IMR-90 (cell line): ENCODE measurements at regions of chr7 and their contacts with region 1.

Region 1: GRCh38 chr7:51067757-51068156 is 248.9 kb downstream of the COBL start:
- DNase-seq: peak; percentile 74
- ATAC-seq: peak; percentile 91
- H3K4me3 ChIP-seq: no peak overlapping the region
- H3K27ac ChIP-seq: no peak overlapping the region
- H3K4me1 ChIP-seq: no peaks in the 10 kb centered on the region
- H3K27me3 ChIP-seq: peaks cover 11% of the 10 kb centered on the region; the same call in 1 of the 2 replicates
- CTCF ChIP-seq: peak; percentile 75
- POLR2A ChIP-seq: no peak
- RAD21 ChIP-seq: peak; percentile 77

Region 2: DNA sequence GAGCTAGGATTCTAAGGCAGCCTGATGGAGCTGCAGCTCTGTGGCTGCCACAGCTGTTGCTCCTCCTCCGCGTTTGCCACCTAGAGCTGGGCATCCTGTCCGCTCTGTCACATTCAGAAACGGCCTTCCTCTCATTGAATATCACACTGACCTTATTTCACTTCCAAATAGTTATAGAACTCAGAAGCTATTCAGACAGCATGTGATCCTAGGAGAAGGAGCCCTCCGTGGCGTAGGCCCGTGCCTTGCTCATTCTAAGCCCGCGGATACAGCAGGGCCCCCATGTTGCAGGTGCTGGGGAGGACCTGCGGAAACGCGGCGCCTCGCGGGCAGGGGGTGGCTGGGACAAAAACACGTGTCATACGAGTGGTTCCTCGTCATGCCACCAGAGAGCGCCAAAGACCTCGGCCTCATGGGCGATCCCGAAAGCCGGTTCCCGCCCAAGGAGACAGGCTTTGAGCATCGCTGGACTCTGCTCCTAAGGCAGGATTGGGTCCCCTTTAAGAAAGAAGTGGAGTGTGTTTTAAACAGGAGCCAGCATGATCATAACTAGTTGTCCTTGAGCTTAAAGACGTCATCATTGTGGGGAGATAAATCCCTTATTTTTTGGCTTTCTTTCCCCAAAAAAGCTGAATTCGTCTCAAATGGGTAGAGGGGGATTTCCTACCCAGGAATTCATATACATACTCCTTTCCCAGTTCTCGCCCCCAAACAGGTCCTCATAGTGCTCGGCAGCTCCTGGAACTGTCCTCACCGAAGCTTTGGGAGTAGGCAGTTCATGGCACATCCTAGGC is 599.7 kb before region 1 on chr7:
- CTCF ChIA-PET with region 1: interaction called, 8 read pairs
- POLR2A ChIA-PET with region 1: no interaction called
- dilution Hi-C with region 1: no loop called
- in situ Hi-C with region 1: loop called (anchors 10 kb)
- intact Hi-C with region 1: loop called (anchors 1 kb)
- DNase-seq: peak; percentile 58
- ATAC-seq: peak; percentile 100
- H3K4me3 ChIP-seq: no peak overlapping the region
- H3K27ac ChIP-seq: no peak overlapping the region
- H3K4me1 ChIP-seq: no peaks in the 10 kb centered on the region
- H3K27me3 ChIP-seq: peaks cover 19% of the 10 kb centered on the region
- CTCF ChIP-seq: peak; percentile 92
- POLR2A ChIP-seq: peak; percentile 36; the same call in 1 of the 2 replicates
- RAD21 ChIP-seq: peak; percentile 96

Region 3: GRCh38 chr7:50608196-50608906 is 459.4 kb before region 1 on chr7:
- CTCF ChIA-PET with region 1: no interaction called
- POLR2A ChIA-PET with region 1: no interaction called
- dilution Hi-C with region 1: no loop called
- in situ Hi-C with region 1: no loop called
- intact Hi-C with region 1: loop called (anchors 10 kb)
- DNase-seq: no peak
- ATAC-seq: no peak
- H3K4me3 ChIP-seq: no peak overlapping the region
- H3K27ac ChIP-seq: no peak overlapping the region
- H3K4me1 ChIP-seq: no peaks in the 10 kb centered on the region
- H3K27me3 ChIP-seq: no peaks in the 10 kb centered on the region
- CTCF ChIP-seq: no peak
- POLR2A ChIP-seq: no peak
- RAD21 ChIP-seq: no peak

Region 4: DNA sequence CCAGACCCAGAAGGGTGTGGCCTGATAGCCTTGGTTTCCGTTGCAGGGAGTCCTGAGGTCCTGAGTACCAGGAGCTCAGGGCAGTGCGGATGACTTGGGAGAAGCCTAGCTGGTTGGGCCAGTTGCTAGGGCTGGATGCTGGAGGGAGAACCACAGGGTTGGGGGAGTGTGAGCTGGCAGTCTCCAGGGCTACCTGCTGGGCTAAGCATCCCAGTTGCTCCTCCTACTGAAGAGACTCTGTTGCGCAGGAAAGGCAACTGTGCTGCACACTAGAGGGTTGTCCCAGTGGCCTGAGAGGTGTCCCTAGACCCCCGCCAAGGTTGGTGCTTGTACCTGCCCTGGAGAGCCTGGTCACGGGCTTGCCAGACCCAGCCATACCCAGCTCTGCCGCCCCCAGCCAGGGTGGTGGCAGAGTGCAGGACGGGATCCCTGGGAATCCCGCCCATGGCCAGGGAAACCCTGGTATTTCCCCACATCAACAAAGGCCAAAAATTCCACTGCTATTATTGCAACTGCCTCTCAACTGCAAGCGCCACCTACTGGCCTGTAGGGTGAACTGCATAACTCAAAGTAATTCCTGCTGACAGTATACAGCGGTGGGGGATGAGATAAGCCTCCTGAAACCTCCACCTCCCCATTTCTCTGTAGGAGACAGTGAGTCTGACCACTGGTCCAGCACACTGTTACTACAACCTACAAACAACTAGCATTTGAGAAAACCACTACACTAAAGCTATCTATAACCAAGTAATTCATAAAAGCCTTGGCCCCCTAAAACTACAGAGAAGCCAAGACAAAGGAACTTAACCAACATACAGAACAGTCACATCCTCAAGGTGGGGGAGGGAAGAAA is 435.0 kb before region 1 on chr7:
- CTCF ChIA-PET with region 1: no interaction called
- POLR2A ChIA-PET with region 1: no interaction called
- dilution Hi-C with region 1: no loop called
- in situ Hi-C with region 1: no loop called
- intact Hi-C with region 1: loop called (anchors 1 kb)
- DNase-seq: peak; percentile 50
- ATAC-seq: peak; percentile 95
- H3K4me3 ChIP-seq: no peak overlapping the region
- H3K27ac ChIP-seq: no peak overlapping the region
- H3K4me1 ChIP-seq: no peaks in the 10 kb centered on the region
- H3K27me3 ChIP-seq: no peaks in the 10 kb centered on the region
- CTCF ChIP-seq: peak; percentile 82
- POLR2A ChIP-seq: no peak
- RAD21 ChIP-seq: peak; percentile 54

Region 5: DNA sequence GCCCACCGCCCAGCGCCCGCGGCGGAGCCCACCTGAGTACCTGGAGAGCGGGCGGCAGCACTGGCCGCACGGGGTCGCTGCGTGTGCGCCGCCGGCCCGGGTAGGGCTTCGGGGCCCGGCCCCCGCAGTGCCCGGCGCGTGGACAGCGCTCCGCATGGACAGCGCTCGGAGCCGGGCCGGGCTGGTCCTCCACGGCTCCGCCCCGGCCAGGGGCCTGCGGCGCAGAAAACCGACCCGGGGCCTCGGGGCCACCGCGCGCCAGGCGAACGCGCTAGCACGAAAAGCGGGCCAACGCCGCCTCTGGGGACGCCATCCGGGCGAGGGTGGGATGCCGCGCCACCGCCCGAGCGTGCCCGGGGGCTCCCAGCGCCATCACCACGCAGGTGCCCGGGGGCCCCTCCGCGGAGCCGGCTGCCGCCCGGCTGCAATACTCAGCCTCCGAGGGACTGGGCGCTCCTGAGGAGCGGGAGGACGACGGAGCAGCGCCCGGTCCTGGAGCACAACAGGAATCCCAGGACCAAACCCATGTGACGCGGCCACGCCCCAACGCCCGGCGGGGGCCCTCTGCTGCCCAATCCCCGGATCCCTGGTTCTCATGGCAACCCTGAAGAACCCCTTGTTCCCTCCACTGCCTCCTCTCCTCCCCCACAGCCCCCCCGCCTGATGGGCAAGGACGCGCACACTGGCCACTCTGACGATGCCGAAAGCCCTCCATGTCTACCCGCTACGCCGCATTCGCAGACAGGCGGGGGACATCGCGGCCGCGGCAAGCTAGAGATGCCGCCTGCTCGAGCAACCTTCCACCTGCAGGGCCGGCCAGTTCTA is 285.2 kb before region 1 on chr7 and contains the start of gene GRB10:
- CTCF ChIA-PET with region 1: no interaction called
- POLR2A ChIA-PET with region 1: no interaction called
- dilution Hi-C with region 1: no loop called
- in situ Hi-C with region 1: loop called (anchors 25 kb)
- intact Hi-C with region 1: loop called (anchors 1 kb)
- DNase-seq: peak; percentile 20
- ATAC-seq: peak; percentile 91
- H3K4me3 ChIP-seq: peak within 1 kb of the TSS; percentile 47
- H3K27ac ChIP-seq: no peak within 1 kb of the TSS
- H3K4me1 ChIP-seq: peaks cover 3% of the 10 kb centered on the region; the same call in 1 of the 2 replicates
- H3K27me3 ChIP-seq: no peaks in the 10 kb centered on the region
- CTCF ChIP-seq: peak; percentile 45
- POLR2A ChIP-seq: no peak
- RAD21 ChIP-seq: peak; percentile 59
- total RNA-seq, gene GRB10: 11.7 and 15.1 TPM in 2 replicates

Region 6: DNA sequence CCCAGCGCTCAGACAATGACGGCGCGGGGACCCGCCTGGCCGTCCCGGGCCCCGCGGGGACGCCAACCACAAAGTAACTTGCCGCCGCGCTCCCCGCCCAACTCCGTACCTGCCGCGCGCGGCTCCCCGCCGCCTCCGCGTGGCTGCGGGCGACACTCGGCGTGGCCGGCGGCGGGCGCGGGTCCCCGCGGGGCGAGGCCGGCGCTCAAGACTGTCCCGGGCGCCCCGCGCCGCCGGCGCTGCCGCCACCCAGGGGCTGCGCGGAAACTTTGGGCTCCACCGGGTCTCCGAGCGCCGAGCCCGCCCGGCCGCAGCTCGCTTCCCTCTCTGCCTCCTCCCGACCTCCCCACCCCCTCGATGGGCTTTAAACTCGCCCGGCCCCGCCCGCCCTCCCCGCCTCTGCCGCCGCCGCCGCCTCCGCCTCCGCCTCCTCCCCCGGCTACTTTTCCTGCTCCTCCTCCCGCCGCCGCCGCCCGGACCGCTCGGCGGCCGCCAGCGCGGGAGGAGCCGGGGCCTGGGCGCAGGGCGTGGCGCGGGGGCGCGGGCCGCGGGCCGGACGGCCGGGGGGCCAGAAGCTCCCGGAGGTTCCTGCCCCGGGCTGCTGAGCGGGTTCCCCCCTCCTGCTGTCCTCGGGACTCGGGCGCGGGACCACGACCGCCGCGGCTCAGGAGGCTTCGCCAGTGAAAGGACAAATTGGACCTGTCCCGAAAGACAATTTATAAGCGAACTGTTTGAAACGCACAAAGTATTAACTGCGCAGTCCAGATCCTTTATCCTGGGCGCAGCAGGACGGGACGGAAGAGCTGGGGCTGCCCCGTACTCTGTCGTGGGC is 274.4 kb before region 1 on chr7:
- CTCF ChIA-PET with region 1: no interaction called
- POLR2A ChIA-PET with region 1: no interaction called
- dilution Hi-C with region 1: no loop called
- in situ Hi-C with region 1: loop called (anchors 25 kb)
- intact Hi-C with region 1: loop called (anchors 2 kb)
- DNase-seq: peak; percentile 36
- ATAC-seq: peak; percentile 78
- H3K4me3 ChIP-seq: peak overlapping the region; percentile 57
- H3K27ac ChIP-seq: no peak overlapping the region
- H3K4me1 ChIP-seq: peaks cover 10% of the 10 kb centered on the region
- H3K27me3 ChIP-seq: peaks cover 17% of the 10 kb centered on the region
- CTCF ChIP-seq: no peak
- POLR2A ChIP-seq: no peak
- RAD21 ChIP-seq: no peak

Region 7: DNA sequence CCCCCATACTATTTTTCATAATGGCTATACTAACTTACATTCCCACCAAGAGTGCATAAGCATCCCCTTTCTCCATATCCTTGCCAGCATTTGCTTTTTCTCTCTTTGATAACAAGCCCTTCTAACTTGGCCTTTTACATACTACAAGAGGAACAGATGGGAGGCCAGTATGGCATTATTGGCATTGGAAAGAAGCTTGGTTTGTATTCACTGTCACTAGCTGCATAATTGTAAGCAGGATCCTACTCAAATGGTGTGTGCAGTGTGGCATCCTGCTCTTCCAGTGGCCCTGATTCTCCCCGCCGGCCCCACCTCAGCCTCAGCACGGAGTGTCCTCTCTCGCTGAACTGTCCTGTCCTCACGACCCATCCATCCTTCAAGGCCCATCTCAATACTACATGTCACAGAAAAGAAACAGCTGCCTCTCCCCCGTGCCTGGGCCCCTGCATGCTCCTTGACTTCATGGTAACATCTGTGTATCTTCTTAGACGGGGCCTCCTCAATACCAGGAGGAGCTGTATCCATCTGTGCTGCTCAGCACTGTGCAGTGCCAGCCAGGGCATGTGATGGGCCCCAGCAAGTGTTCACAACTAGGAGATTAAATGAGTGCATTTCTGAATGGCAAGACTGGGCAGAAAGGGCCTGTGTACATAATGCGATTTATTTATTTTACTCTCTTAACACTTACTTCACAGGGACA is 43.6 kb after region 1 on chr7:
- CTCF ChIA-PET with region 1: no interaction called
- POLR2A ChIA-PET with region 1: no interaction called
- dilution Hi-C with region 1: no loop called
- in situ Hi-C with region 1: no loop called
- intact Hi-C with region 1: no loop called
- DNase-seq: no peak
- ATAC-seq: no peak
- H3K4me3 ChIP-seq: no peak overlapping the region
- H3K27ac ChIP-seq: no peak overlapping the region
- H3K4me1 ChIP-seq: no peaks in the 10 kb centered on the region
- H3K27me3 ChIP-seq: no peaks in the 10 kb centered on the region; the same call in 1 of the 2 replicates
- CTCF ChIP-seq: no peak
- POLR2A ChIP-seq: no peak
- RAD21 ChIP-seq: no peak